ENCODE measurements at regions of chr2 and their contacts with region 1.

Region 1: GRCh38 chr2:85826990-85827878 is 61.6 kb downstream of the ST3GAL5 start:
- DNase-seq: no peak
- ATAC-seq: peak; percentile 98
- H3K4me3 ChIP-seq: no peak overlapping the region
- H3K27ac ChIP-seq: no peak overlapping the region
- H3K4me1 ChIP-seq: no peaks in the 10 kb centered on the region
- H3K27me3 ChIP-seq: no peaks in the 10 kb centered on the region; a peak in 1 of 4 replicates
- CTCF ChIP-seq: peak; percentile 77 to 89 (median 88); a peak in 5 of 6 replicates
- EP300 ChIP-seq: no peak
- POLR2A ChIP-seq: no peak
- RAD21 ChIP-seq: peak; percentile 85

Region 2: GRCh38 chr2:85728883-85729824 is 98.1 kb before region 1 on chr2:
- CTCF ChIA-PET with region 1: interaction called, 11 read pairs
- POLR2A ChIA-PET with region 1: interaction called, 3 read pairs
- RAD21 ChIA-PET with region 1: interaction called, 7 read pairs
- SMC1A ChIA-PET with region 1: interaction called, 31 read pairs
- in situ Hi-C with region 1: no loop called
- intact Hi-C with region 1: no loop called
- DNase-seq: no peak
- ATAC-seq: peak; percentile 98
- H3K4me3 ChIP-seq: no peak overlapping the region
- H3K27ac ChIP-seq: no peak overlapping the region
- H3K4me1 ChIP-seq: no peaks in the 10 kb centered on the region; the same call in 1 of the 2 replicates
- H3K27me3 ChIP-seq: no peaks in the 10 kb centered on the region
- CTCF ChIP-seq: peak; percentile 96 to 99 (median 99); a peak in 5 of 6 replicates
- EP300 ChIP-seq: no peak
- POLR2A ChIP-seq: no peak
- RAD21 ChIP-seq: peak; percentile 94

Region 3: DNA sequence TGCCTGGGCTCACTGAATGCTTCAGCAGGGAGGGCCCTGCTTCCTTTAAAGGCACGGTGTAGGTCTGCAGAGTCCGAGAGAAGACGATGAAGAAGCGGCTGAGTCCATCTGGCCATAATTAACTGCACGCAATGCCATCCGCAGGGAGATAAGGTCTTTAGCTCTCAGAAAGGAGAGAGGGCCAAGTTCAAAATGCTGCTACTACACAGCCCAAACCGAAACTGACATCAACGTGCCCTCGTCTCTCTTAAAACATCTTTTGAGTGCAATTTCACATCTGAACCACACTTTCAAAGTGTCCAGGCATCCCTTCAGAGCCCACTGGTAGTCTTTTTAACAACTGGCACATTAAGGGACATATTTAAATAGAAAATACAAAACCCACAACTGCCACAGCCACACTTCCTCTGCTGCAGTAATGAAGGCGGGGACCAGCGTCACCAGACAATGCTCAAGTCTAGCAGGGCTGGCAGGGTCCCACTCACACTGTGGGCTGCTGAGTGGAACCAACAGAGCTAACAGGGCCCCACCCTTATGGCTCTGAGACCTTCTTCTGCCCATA is 25.8 kb after region 1 on chr2:
- CTCF ChIA-PET with region 1: interaction called, 24 read pairs
- POLR2A ChIA-PET with region 1: interaction called, 4 read pairs
- RAD21 ChIA-PET with region 1: interaction called, 14 read pairs
- SMC1A ChIA-PET with region 1: interaction called, 90 read pairs
- in situ Hi-C with region 1: no loop called
- intact Hi-C with region 1: loop called (anchors 2 kb)
- DNase-seq: peak; percentile 88
- ATAC-seq: peak; percentile 84
- H3K4me3 ChIP-seq: peak overlapping the region; percentile 51; the same call in 1 of the 2 replicates
- H3K27ac ChIP-seq: peak overlapping the region; percentile 84
- H3K4me1 ChIP-seq: peaks cover 49% of the 10 kb centered on the region
- H3K27me3 ChIP-seq: no peaks in the 10 kb centered on the region
- CTCF ChIP-seq: no peak
- EP300 ChIP-seq: peak; percentile 5 to 51; a peak in 1 of 4 replicates
- POLR2A ChIP-seq: peak; percentile 57; the same call in 1 of the 2 replicates
- RAD21 ChIP-seq: no peak

Region 4: DNA sequence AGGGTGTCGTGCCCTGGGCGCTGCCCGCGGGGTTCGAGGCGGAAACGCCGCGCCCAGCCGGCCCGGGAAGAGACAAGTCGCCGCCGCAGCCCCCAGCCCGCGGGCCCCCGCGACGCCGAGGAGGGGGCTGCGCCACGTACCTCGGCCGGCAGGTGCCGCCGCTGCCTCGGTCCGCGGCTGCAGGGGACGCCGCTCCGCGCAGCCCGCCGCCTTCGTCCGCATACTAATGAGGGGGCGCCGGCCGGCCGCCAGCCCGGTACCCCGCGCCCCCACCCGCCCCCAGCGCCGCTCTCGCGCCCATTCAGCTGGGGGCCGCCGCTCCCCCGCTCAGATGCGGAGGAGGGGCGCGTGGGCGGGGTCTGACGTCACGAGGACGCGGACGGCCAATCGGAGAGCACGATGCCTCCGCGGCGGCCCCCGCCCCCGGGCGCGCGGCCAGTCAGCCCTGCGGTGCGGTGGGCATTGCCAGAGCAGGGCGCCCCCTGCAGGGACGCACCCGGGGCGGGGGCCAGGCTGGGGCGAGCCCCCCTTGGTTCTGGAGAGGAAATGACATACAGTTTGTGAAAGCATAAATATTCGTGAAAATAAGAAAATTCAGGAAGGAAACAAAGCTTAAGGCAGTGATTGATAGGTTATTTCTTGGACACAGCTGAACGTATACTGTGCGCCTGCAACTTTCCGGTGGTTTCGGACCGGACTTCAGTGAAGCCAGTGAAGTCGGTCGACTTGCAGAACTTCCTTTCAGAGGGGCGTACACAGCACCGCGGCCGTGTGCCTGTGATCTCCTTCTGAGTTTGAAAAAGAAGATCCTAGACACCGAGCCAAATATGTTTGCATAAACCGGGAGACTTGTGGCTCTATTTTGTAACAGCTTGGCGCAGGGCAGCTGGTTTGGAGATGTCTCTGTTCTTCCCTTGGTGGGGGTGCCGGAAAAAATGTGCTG is 61.7 kb after region 1 on chr2 and contains the start of gene ST3GAL5:
- CTCF ChIA-PET with region 1: interaction called, 251 read pairs
- POLR2A ChIA-PET with region 1: interaction called, 7 read pairs
- RAD21 ChIA-PET with region 1: interaction called, 259 read pairs
- SMC1A ChIA-PET with region 1: interaction called, 248 read pairs
- in situ Hi-C with region 1: loop called (anchors 5 kb)
- intact Hi-C with region 1: loop called (anchors 1 kb)
- DNase-seq: peak; percentile 51
- ATAC-seq: peak; percentile 87
- H3K4me3 ChIP-seq: peak within 1 kb of the TSS; percentile 65
- H3K27ac ChIP-seq: peak within 1 kb of the TSS; percentile 4; the same call in 1 of the 2 replicates
- H3K4me1 ChIP-seq: peaks cover 13% of the 10 kb centered on the region; the same call in 1 of the 2 replicates
- H3K27me3 ChIP-seq: no peaks in the 10 kb centered on the region; a peak in 1 of 4 replicates
- CTCF ChIP-seq: peak; percentile 79 to 84 (median 81)
- EP300 ChIP-seq: peak; percentile 28 to 57; a peak in 1 of 4 replicates
- POLR2A ChIP-seq: peak; percentile 39; the same call in 1 of the 2 replicates
- RAD21 ChIP-seq: peak; percentile 71
- polyA plus RNA-seq, gene ST3GAL5: 5.6 to 7.5 TPM

Region 5: GRCh38 chr2:86025229-86025820 is 198.1 kb after region 1 on chr2:
- CTCF ChIA-PET with region 1: interaction called, 15 read pairs
- POLR2A ChIA-PET with region 1: no interaction called
- RAD21 ChIA-PET with region 1: interaction called, 19 read pairs
- SMC1A ChIA-PET with region 1: interaction called, 21 read pairs
- in situ Hi-C with region 1: no loop called
- intact Hi-C with region 1: no loop called
- DNase-seq: no peak
- ATAC-seq: no peak
- H3K4me3 ChIP-seq: no peak overlapping the region
- H3K27ac ChIP-seq: no peak overlapping the region
- H3K4me1 ChIP-seq: no peaks in the 10 kb centered on the region
- H3K27me3 ChIP-seq: no peaks in the 10 kb centered on the region
- CTCF ChIP-seq: no peak
- EP300 ChIP-seq: no peak
- POLR2A ChIP-seq: no peak
- RAD21 ChIP-seq: no peak

Region 6: GRCh38 chr2:86105252-86105968 is 278.2 kb after region 1 on chr2 and contains the start of gene POLR1A:
- CTCF ChIA-PET with region 1: interaction called, 7 read pairs
- POLR2A ChIA-PET with region 1: interaction called, 3 read pairs
- RAD21 ChIA-PET with region 1: interaction called, 11 read pairs
- SMC1A ChIA-PET with region 1: interaction called, 11 read pairs
- in situ Hi-C with region 1: no loop called
- intact Hi-C with region 1: no loop called
- DNase-seq: no peak
- ATAC-seq: peak; percentile 90
- H3K4me3 ChIP-seq: peak within 1 kb of the TSS; percentile 88
- H3K27ac ChIP-seq: peak within 1 kb of the TSS; percentile 91
- H3K4me1 ChIP-seq: no peaks in the 10 kb centered on the region
- H3K27me3 ChIP-seq: no peaks in the 10 kb centered on the region
- CTCF ChIP-seq: no peak
- EP300 ChIP-seq: no peak
- POLR2A ChIP-seq: no peak
- RAD21 ChIP-seq: no peak
- polyA plus RNA-seq, gene POLR1A: 2.1 to 6.1 TPM

Measured in GM12878 (cell line).